BJ (cell line): ENCODE measurements at regions of chr9 and their contacts with region 1.

Region 1: GRCh38 chr9:81874931-81875330 is 53.3 kb upstream of the SPATA31D4 start:
- DNase-seq: peak; percentile 60
- H3K4me3 ChIP-seq: no peak overlapping the region
- H3K27me3 ChIP-seq: no peaks in the 10 kb centered on the region
- CTCF ChIP-seq: no peak

Region 2: GRCh38 chr9:81578606-81579005 is 296.3 kb before region 1 on chr9:
- CTCF ChIA-PET with region 1: no interaction called
- POLR2A ChIA-PET with region 1: interaction called, 11 read pairs
- DNase-seq: peak; percentile 35
- H3K4me3 ChIP-seq: no peak overlapping the region
- H3K27me3 ChIP-seq: no peaks in the 10 kb centered on the region
- CTCF ChIP-seq: no peak

Region 3: DNA sequence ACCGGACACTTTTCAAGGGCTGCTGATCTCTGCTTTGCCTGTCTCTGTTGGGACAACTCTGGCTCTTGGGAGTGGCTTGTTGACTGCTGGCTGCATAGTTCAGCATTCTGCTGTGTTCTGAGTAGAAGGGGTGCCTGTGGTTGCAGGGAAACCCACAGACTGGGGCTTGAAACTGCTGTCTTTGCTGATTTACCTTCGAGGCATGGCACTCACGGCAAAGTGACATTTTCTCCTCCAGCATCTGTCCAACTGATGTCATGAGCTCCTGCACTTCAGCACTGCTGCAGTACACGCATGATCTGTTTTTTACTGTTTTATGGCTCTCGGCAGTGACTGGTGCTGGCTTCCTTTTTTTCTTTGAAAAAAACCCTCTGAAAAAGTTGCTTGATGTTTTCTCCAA is 182.9 kb after region 1 on chr9:
- CTCF ChIA-PET with region 1: no interaction called
- POLR2A ChIA-PET with region 1: no interaction called
- DNase-seq: no peak
- H3K4me3 ChIP-seq: no peak overlapping the region
- H3K27me3 ChIP-seq: peaks cover 4% of the 10 kb centered on the region; the same call in 1 of the 2 replicates
- CTCF ChIP-seq: no peak